Dendritic cell treated with granulocyte-macrophage colony-stimulating factor and Interleukin-4, amounts not matched to agents 40 ng/mL and 50 ng/mL, for 4 days (primary cell): ENCODE measurements at regions of chr15 and their contacts with region 1.

Region 1: DNA sequence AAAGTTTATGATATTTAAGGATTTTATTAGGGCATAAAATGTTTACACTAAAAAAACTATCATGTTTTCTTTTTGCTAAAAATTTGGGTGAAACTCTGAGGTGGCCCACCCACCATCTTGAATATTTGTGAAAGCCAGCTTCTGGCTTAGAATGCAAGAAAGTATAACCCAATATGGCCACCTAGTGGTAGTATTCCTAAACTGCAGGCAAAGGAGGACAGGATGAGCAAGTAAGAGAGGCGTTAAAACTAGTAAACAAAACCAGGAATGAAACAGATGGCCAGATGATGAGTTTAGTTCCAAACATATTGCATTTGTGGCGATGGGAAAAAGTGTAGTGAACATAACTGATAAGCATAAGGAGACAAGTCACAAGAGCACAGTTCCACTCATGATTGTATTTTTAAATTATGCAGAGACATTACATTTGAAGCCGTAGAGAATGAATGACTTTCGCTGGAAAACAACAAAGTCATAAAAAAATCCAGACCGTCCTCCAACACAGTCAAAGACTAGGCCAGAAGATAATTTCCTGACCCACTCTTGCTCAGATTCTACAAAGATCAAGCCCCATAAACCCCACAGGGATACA is 103.3 kb upstream of the PRTG start:
- H3K4me3 Mint-ChIP-seq: no peak overlapping the region
- H3K27ac Mint-ChIP-seq: no peak overlapping the region
- H3K4me1 Mint-ChIP-seq: no peaks in the 10 kb centered on the region
- H3K27me3 Mint-ChIP-seq: no peaks in the 10 kb centered on the region

Region 2: DNA sequence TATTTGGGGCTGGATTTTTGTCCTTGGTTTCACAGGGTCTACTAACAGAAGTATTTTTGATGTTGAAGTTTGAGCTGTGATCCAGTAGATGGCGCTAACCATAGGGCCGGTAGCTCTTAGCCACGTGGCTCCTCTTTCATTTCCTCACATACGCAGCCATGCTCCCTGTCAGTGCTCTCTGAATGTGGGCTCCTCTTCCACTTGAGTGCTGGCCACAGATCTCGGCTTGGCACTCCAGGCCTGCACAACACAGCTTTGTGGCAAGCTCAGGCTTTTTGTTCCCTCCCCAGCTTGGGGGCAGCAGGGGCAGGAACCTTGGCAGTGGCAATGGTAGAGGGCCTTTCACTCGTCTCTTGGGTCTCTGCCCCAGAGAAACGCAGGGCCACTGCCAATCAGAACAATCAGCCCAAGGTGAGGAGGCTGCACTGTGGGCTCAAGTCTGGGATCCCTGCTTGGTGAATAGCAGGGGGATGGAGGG is 319.6 kb before region 1 on chr15:
- intact Hi-C with region 1: loop called (anchors 2 kb)
- H3K4me3 Mint-ChIP-seq: no peak overlapping the region
- H3K27ac Mint-ChIP-seq: no peak overlapping the region
- H3K4me1 Mint-ChIP-seq: peaks cover 6% of the 10 kb centered on the region
- H3K27me3 Mint-ChIP-seq: peaks cover 10% of the 10 kb centered on the region

Region 3: GRCh38 chr15:55649054-55649423 is 197.2 kb before region 1 on chr15:
- intact Hi-C with region 1: loop called (anchors 1 kb)
- H3K4me3 Mint-ChIP-seq: no peak overlapping the region
- H3K27ac Mint-ChIP-seq: no peak overlapping the region
- H3K4me1 Mint-ChIP-seq: no peaks in the 10 kb centered on the region
- H3K27me3 Mint-ChIP-seq: no peaks in the 10 kb centered on the region

Region 4: DNA sequence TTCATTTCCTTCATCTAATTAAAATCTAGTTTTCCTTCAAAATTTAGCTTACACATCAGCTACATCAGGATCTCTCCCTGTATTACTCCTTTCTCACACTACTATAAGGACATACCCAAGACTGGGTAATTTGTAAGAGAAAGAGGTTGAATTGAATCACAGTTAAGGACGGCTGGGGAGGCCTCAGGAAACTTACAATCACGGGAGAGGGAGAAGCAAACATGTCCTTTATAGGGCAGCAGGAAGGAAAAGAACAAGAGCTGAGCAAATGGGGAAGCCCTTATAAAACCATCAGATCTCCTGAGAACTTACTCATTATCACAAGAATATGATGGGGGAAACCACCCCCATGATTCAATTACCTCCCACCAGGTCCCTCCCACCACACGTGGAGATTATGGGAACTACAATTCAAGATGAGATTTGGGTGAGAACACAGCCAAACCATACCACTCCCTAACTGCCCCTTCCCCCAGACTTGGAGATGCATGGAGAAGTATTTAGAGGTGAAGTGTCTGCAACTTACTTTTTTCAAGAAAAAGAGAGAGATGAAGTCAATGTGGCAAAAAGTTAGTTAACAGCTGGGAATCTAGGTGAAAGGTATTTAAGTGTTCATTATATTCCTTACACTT is 124.5 kb before region 1 on chr15:
- intact Hi-C with region 1: no loop called
- H3K4me3 Mint-ChIP-seq: no peak overlapping the region
- H3K27ac Mint-ChIP-seq: no peak overlapping the region
- H3K4me1 Mint-ChIP-seq: no peaks in the 10 kb centered on the region
- H3K27me3 Mint-ChIP-seq: no peaks in the 10 kb centered on the region